ENCODE measurements at regions of chr2 and their contacts with region 1.

Region 1: DNA sequence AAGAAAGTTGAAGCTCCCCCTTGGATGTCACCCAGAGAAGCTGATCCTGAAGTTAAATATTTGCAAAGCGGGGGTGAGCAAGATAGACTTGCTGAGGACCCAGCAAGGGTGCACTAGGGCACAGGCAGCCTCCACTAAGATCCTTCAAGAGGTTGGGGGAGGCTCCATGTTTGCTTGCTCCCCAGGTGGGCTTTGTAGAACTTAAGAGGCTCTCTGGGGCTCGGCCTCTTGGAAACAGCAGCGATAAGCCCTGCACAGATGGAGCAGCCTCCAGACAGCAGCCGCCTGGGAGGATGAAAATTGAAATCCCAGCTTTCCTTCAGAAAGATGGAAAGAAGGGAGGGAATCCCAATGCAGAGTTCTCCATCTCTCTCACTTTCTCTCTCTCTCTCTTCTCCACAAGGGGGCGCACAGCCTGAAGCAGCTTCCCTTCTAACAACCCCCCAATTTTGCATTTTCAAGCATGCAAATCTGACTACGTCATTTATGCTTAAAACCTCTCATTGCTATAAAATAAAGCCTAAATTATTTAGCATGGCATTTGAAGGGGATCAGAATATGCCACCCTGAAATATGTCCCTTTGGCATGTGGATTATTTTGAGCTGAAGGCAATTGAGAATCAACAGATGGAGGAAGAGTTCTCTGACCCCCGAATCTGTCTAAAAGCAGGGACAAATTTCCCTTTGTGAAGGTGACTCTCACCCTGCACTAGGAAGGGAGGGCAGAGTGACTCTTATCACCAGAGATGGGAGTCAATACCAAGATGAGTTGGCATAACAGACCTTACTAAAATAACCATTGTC is 185.7 kb upstream of the KLHL29 start:
- DNase-seq: peak; percentile 43
- H3K4me3 Mint-ChIP-seq: no peak overlapping the region
- H3K27ac Mint-ChIP-seq: no peak overlapping the region
- H3K4me1 Mint-ChIP-seq: no peaks in the 10 kb centered on the region
- H3K27me3 Mint-ChIP-seq: peaks cover 16% of the 10 kb centered on the region
- CTCF ChIP-seq: peak; percentile 67

Region 2: GRCh38 chr2:23249348-23249747 is 50.0 kb after region 1 on chr2:
- CTCF ChIA-PET with region 1: no interaction called
- intact Hi-C with region 1: loop called (anchors 2 kb)
- DNase-seq: no peak
- H3K4me3 Mint-ChIP-seq: no peak overlapping the region
- H3K27ac Mint-ChIP-seq: no peak overlapping the region
- H3K4me1 Mint-ChIP-seq: no peaks in the 10 kb centered on the region
- H3K27me3 Mint-ChIP-seq: peaks cover 39% of the 10 kb centered on the region
- CTCF ChIP-seq: no peak

Region 3: GRCh38 chr2:23351388-23352141 is 152.2 kb after region 1 on chr2:
- CTCF ChIA-PET with region 1: no interaction called
- intact Hi-C with region 1: loop called (anchors 5 kb)
- DNase-seq: peak; percentile 84
- H3K4me3 Mint-ChIP-seq: no peak overlapping the region
- H3K27ac Mint-ChIP-seq: no peak overlapping the region
- H3K4me1 Mint-ChIP-seq: no peaks in the 10 kb centered on the region
- H3K27me3 Mint-ChIP-seq: peaks cover 49% of the 10 kb centered on the region
- CTCF ChIP-seq: peak; percentile 73

Region 4: GRCh38 chr2:23460228-23460627 is 260.9 kb after region 1 on chr2:
- CTCF ChIA-PET with region 1: no interaction called
- intact Hi-C with region 1: loop called (anchors 5 kb)
- DNase-seq: no peak
- H3K4me3 Mint-ChIP-seq: no peak overlapping the region
- H3K27ac Mint-ChIP-seq: no peak overlapping the region
- H3K4me1 Mint-ChIP-seq: no peaks in the 10 kb centered on the region
- H3K27me3 Mint-ChIP-seq: no peaks in the 10 kb centered on the region
- CTCF ChIP-seq: peak; percentile 42